ENCODE measurements at regions of chr6 and their contacts with region 1.

Region 1: DNA sequence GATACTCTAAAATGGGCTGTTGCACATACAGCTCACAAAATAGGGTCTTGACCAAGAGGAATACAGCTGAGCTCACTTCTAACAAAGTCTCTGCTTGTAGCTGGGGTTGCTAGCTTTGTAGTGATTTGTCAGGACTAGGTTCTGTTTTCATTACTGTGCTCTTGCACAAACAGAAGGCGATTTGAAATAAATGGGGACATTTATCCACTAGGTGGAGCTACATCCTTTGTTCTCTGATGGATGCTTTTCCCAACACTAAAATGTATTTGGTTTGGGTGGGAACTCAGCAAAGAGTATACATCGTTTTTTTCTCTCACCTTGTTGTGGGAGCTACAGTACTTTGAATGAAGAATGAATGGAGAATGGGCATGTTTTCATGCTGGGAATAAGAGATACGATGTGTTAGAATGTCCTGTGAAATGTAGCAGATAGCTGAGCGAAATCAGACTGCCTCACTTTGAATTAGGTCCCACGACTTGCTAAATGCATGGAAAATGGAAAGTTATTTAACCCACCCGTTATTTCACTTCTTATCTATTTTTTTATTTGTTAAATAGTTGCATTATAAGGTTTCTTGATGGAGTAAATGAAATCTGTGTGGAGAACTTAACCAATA is 494.7 kb upstream of the MAP3K7 start:
- DNase-seq: peak; percentile 40
- H3K4me3 ChIP-seq: no peak overlapping the region
- H3K27ac ChIP-seq: no peak overlapping the region
- H3K4me1 ChIP-seq: no peaks in the 10 kb centered on the region
- H3K27me3 ChIP-seq: no peaks in the 10 kb centered on the region
- CTCF ChIP-seq: peak; percentile 64 to 72

Region 2: GRCh38 chr6:91198588-91199255 is 117.2 kb after region 1 on chr6:
- CTCF ChIA-PET with region 1: no interaction called
- dilution Hi-C with region 1: no loop called
- in situ Hi-C with region 1: no loop called
- intact Hi-C with region 1: no loop called
- DNase-seq: no peak
- H3K4me3 ChIP-seq: no peak overlapping the region
- H3K27ac ChIP-seq: no peak overlapping the region
- H3K4me1 ChIP-seq: no peaks in the 10 kb centered on the region
- H3K27me3 ChIP-seq: no peaks in the 10 kb centered on the region
- CTCF ChIP-seq: no peak

Region 3: DNA sequence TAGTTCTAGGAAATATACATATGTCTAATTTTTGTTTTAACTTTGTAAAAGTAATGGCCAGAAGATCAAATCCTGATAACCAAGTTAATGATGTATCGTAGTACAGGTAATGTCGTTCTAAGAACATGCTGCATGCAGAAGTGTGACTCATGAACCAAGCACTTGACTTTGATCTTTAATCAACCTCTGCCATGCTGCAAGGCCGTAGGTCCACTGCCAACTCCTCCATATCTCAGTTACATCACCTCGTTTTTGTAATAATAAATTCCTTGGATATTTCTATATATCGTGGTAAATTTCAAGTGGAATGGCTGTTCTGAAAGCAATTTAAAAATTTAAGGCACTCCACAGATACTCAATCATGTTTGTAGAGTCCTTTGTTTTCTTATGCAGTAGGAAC is 1566.1 kb after region 1 on chr6:
- CTCF ChIA-PET with region 1: no interaction called
- dilution Hi-C with region 1: no loop called
- in situ Hi-C with region 1: no loop called
- intact Hi-C with region 1: loop called (anchors 10 kb)
- DNase-seq: no peak
- H3K4me3 ChIP-seq: no peak overlapping the region
- H3K27ac ChIP-seq: no peak overlapping the region
- H3K4me1 ChIP-seq: no peaks in the 10 kb centered on the region
- H3K27me3 ChIP-seq: no peaks in the 10 kb centered on the region
- CTCF ChIP-seq: no peak

Measured in mammary epithelial cell (primary cell).